Sigmoid colon (tissue), 7 donors: ENCODE measurements at regions of chr15 and their contacts with region 1.

Region 1: GRCh38 chr15:84840741-84841429 is 23.7 kb downstream of the ALPK3 start:
- DNase-seq: peak; percentile 93
- H3K4me3 ChIP-seq: no peak overlapping the region
- H3K27ac ChIP-seq: peak overlapping the region; percentile 75 to 90 (median 82)
- H3K4me1 ChIP-seq: peaks cover 0 to 46% (median 36%) of the 10 kb centered on the region in 4 donors
- H3K27me3 ChIP-seq: no peaks in the 10 kb centered on the region
- CTCF ChIP-seq: no peak
- EP300 ChIP-seq: peak; percentile 49 to 90 (median 76)
- POLR2A ChIP-seq: no peak

Region 2: DNA sequence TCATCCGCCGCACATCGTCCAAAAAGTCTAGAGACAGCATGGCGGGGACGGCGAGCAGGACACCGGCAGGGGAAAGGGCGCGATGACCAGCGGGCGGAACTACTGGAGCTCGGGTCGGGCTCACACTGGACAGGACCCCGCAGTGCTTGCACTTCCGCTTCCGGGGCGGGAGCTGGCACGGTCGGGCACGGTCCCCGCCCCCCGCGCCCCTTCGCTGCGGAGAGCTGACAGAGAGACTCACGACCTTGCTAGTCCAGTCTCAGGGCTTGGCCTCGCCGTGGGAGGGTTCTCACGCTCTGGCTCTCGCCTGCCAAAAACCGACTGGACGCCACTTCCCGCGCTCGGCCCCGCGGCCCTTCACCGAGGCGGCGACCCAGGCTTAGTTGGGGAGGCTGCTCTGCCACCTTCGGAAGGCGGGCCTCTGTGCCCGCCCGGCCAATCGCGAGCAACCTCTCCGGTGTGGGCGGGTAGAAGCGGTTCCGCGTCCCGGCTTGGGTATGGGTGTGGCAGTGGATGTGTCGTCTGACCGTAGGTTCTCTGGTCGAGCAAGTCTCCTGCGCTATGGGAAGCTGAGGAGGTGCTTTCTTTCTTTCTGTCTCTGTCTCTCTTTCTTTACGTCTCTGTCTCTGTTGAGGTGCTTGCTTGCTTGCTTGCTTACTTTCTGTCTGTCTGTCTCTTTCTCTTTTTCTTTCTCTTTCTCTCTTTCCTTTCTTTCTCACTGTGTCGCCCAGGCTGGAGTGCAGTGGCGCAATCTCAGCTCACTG is 124.7 kb before region 1 on chr15 and contains the start of gene SEC11A:
- intact Hi-C with region 1: loop called (anchors 10 kb)
- DNase-seq: peak; percentile 96
- H3K4me3 ChIP-seq: peak within 1 kb of the TSS; percentile 71 to 87 (median 76)
- H3K27ac ChIP-seq: peak within 1 kb of the TSS; percentile 86 to 95 (median 94)
- H3K4me1 ChIP-seq: peaks cover 0 to 28% (median 24%) of the 10 kb centered on the region in 4 donors
- H3K27me3 ChIP-seq: no peaks in the 10 kb centered on the region
- CTCF ChIP-seq: no peak
- EP300 ChIP-seq: no peak
- POLR2A ChIP-seq: peak; percentile 60 to 86
- total RNA-seq, gene SEC11A: 83.9 to 153 (median 112) TPM

Region 3: GRCh38 chr15:84883916-84884768 is 43.3 kb after region 1 on chr15 and contains the start of gene SLC28A1:
- intact Hi-C with region 1: no loop called
- DNase-seq: no peak
- H3K4me3 ChIP-seq: no peak within 1 kb of the TSS
- H3K27ac ChIP-seq: no peak within 1 kb of the TSS
- H3K4me1 ChIP-seq: no peaks in the 10 kb centered on the region
- H3K27me3 ChIP-seq: peaks cover 0 to 14% (median 0%) of the 10 kb centered on the region in 3 donors
- CTCF ChIP-seq: no peak
- EP300 ChIP-seq: no peak
- POLR2A ChIP-seq: no peak
- total RNA-seq, gene SLC28A1: not detected

Region 4: GRCh38 chr15:84929744-84930371 is 89.0 kb after region 1 on chr15:
- intact Hi-C with region 1: loop called (anchors 2 kb)
- DNase-seq: no peak
- H3K4me3 ChIP-seq: no peak overlapping the region
- H3K27ac ChIP-seq: no peak overlapping the region
- H3K4me1 ChIP-seq: peaks cover 0 to 8% (median 7%) of the 10 kb centered on the region in 4 donors
- H3K27me3 ChIP-seq: no peaks in the 10 kb centered on the region
- CTCF ChIP-seq: no peak
- EP300 ChIP-seq: no peak
- POLR2A ChIP-seq: no peak